Activated CD4-positive, alpha-beta T cell treated with anti-CD3 and anti-CD28 coated beads, Interleukin-2, amount 10 ng/mL, durations not matched to agents 24 days and 14 days (primary cell): ENCODE measurements at regions of chr10 and their contacts with region 1.

Region 1: DNA sequence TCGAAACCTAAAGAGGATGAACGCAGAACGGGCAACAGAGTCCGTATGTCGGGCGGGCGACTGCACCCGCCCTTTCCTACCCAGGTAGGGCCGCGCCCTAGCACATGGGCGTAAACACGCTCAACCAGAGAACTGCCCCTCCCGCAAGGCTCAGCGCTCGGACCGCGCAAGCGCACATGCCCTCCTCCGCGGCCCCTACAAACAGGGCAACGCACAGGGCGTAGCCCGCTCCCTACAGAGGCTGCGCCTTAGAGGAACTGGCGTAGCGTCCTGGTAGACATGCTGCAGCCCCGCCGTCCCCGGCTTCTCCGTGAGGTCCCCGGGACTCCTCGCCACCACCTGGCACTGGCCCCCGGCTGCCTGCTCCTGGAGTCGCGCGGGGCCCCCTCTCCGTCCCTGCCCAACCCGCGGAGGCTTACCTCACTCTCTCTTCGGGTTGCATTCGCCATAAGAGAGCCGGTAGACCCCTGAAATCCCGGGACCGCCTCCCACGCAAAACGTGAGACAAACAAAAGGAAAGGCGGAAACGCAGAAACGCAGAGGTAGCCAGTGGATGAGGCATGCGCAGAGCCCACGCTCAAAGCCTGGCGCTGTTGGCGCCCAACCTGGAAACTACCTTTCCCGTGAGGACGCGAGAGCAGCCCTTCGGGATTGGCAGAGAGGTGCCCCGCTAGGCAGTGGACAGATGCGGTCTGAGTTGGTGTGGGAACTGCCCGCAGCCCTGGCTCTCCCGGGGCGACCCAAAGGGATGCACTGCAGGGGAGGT is at the start of gene ZNF33B:
- DNase-seq: peak; percentile 98
- H3K4me3 Mint-ChIP-seq: peak within 1 kb of the TSS; percentile 90
- H3K27ac Mint-ChIP-seq: peak within 1 kb of the TSS; percentile 99
- H3K4me1 Mint-ChIP-seq: peaks cover 26% of the 10 kb centered on the region
- H3K27me3 Mint-ChIP-seq: no peaks in the 10 kb centered on the region
- total RNA-seq, gene ZNF33B: 7.1 and 7.8 TPM in 2 replicates

Region 2: DNA sequence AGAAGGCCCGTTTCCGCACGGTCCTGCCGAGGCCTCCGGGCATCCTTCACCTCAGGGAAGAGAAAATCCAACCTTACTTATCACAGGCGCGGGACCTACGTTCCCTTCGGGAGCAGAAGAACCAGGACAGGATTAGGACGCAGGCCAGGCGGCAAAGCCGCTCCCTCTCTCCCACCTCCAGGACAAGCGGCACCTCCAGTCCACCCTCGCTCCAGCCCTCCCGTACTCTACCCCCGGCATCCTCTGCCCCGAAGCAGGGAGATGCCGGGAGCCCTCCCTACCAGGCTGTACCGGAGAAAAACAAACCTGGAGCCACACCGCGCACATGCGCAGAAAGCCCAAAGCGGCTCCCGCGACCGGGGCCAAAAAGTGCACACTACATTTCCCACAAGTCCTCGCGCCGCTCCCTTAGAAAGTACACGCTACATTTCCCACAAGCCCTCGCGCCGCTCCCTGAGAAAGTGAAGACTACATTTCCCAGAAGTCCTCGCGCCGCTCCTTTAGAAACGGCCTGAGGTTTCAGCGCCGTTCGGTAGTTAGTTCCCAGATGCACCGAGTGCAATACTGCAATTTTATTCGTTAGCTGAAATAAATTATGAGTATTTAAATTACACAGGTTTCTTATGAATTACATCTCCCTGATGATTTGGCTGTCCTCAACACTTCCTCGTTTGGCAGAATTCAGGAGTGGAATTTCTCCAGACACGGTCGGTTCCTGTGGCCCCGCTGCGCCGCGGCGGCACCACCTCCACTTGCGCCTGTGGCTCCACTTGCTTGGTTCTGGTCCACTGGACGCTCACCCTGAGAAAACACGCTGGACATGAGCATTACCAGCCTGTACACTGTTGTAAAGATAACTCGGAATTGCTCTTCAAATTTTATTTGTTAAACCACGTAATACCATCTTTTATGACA is 85.5 kb before region 1 on chr10:
- intact Hi-C with region 1: loop called (anchors 1 kb)
- DNase-seq: peak; percentile 98
- H3K4me3 Mint-ChIP-seq: peak overlapping the region; percentile 94
- H3K27ac Mint-ChIP-seq: peak overlapping the region; percentile 97
- H3K4me1 Mint-ChIP-seq: peaks cover 27% of the 10 kb centered on the region
- H3K27me3 Mint-ChIP-seq: no peaks in the 10 kb centered on the region

Region 3: DNA sequence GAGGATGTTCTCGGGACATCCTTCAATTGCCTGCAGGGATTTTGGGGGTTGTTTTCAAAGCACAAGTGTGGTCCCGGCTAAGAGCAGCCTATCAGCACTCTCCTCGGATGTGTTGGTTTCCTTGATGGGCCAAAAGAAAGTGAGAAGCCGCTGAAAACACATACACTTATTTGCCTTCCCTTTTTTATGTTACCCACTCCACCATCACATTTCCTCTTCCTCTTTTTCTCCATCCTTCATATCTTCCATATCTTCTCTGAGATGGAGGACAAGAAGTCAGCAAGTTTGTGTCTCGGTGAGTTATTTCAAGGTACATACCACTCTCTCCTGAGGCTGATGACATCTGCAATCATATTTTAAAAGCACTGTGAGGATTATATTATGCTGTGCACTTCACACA is 63.9 kb before region 1 on chr10:
- intact Hi-C with region 1: no loop called
- DNase-seq: no peak
- H3K4me3 Mint-ChIP-seq: no peak overlapping the region
- H3K27ac Mint-ChIP-seq: no peak overlapping the region
- H3K4me1 Mint-ChIP-seq: peaks cover 2% of the 10 kb centered on the region
- H3K27me3 Mint-ChIP-seq: no peaks in the 10 kb centered on the region

Region 4: DNA sequence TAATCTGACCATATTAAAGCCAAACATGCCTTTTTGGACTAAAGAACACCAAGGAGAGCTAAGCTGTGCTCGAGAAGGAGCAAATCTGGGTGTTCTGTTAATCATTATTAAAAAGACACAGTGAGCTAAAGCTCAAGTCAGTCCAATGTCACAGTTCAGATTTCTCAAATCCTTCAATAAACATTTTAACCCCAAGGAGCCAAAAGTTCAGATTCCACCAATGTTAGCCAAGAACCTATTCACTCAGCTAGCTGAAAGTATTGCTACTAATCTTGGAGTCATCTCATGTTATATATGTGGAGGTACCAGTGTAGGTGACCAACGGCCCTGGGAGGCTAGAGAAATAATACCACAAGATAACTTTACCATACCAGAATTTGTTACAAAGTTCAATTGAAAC is 14.6 kb after region 1 on chr10:
- intact Hi-C with region 1: no loop called
- DNase-seq: no peak
- H3K4me3 Mint-ChIP-seq: no peak overlapping the region
- H3K27ac Mint-ChIP-seq: no peak overlapping the region
- H3K4me1 Mint-ChIP-seq: peaks cover 5% of the 10 kb centered on the region
- H3K27me3 Mint-ChIP-seq: no peaks in the 10 kb centered on the region

Region 5: DNA sequence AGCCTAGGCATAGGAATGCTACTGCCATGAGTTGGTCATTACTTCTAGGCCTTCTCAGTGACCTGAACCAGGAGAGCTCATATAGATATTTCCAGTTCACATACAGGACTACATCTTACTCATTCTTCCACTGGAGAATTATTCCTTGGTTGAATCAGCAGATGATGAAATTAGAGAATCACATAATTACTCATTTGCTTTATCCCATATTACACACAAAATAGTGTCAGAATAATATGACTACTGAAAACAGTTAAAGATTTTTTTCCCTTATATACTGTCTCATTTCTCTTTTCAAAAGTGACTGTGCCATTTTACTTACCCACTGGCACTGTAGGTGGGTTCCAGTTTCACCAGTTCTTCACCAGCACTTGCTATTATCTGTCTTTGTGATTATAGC is 162.9 kb after region 1 on chr10:
- intact Hi-C with region 1: loop called (anchors 1 kb)
- DNase-seq: no peak
- H3K4me3 Mint-ChIP-seq: no peak overlapping the region
- H3K27ac Mint-ChIP-seq: peak overlapping the region; percentile 73
- H3K4me1 Mint-ChIP-seq: peaks cover 6% of the 10 kb centered on the region
- H3K27me3 Mint-ChIP-seq: no peaks in the 10 kb centered on the region

Region 6: GRCh38 chr10:43407576-43408330 is 769.5 kb after region 1 on chr10:
- intact Hi-C with region 1: loop called (anchors 5 kb)
- DNase-seq: peak; percentile 95
- H3K4me3 Mint-ChIP-seq: peak overlapping the region; percentile 96
- H3K27ac Mint-ChIP-seq: peak overlapping the region; percentile 99
- H3K4me1 Mint-ChIP-seq: peaks cover 32% of the 10 kb centered on the region
- H3K27me3 Mint-ChIP-seq: no peaks in the 10 kb centered on the region

Region 7: GRCh38 chr10:43816351-43817321 is 1178.4 kb after region 1 on chr10:
- intact Hi-C with region 1: loop called (anchors 5 kb)
- DNase-seq: peak; percentile 94
- H3K4me3 Mint-ChIP-seq: peak overlapping the region; percentile 81
- H3K27ac Mint-ChIP-seq: peak overlapping the region; percentile 84
- H3K4me1 Mint-ChIP-seq: peaks cover 46% of the 10 kb centered on the region
- H3K27me3 Mint-ChIP-seq: peaks cover 5% of the 10 kb centered on the region